B cell (primary cell): ENCODE measurements at regions of chr11 and their contacts with region 1.

Region 1: DNA sequence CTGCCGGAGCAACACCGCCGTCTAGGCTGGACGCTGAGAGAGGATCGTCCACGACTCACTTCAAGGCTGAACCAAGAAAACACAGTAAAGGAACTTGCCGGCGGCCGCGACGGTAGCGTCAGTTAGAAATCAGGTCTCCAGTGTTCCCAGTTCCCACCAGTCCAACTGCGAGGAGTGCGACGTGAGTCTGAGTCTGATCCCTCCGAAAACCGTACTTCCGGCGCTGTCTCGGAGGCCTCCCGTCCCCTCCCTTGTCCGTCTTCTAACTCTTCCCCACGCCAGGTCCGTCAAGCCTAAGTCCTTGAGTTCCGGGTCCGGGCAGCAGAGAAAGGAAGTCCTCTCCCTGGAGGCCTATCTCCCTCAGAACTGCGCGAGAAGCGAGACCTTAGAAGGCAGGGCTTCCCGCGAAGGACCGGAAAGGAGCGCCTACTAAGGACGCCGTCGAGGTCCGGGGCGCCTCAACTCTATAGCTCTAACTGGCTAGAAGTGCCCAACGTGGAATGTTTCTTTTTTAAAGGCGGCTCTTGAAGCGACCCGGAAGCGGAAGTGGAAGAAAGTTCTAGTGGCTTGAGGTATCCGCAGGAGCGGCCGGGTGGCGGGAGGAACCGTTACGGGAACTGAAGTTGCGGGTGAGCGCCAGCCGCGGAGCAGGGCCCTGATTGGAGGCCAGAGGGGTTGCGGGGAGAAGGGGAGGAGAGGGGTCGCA is at the starts of genes BANF1 and EIF1AD:
- DNase-seq: peak; percentile 98
- ATAC-seq: peak; percentile 80
- H3K4me3 ChIP-seq: peak within 1 kb of the TSS; percentile 75 to 100 (median 96)
- H3K4me3 Mint-ChIP-seq: peak within 1 kb of the TSS; percentile 98
- H3K27ac ChIP-seq: peak within 1 kb of the TSS; percentile 89 to 94
- H3K27ac Mint-ChIP-seq: peak within 1 kb of the TSS; percentile 99
- H3K4me1 ChIP-seq: peaks cover 16 to 25% of the 10 kb centered on the region in 2 donors
- H3K4me1 Mint-ChIP-seq: peaks cover 34% of the 10 kb centered on the region
- H3K27me3 ChIP-seq: no peaks in the 10 kb centered on the region
- H3K27me3 Mint-ChIP-seq: no peaks in the 10 kb centered on the region
- CTCF ChIP-seq: no peak
- total RNA-seq, gene BANF1: 99.3 and 99.5 TPM in 2 replicates
- total RNA-seq, gene EIF1AD: 61.0 and 65.2 TPM in 2 replicates

Region 2: GRCh38 chr11:65720237-65720934 is 281.7 kb before region 1 on chr11 and contains the start of gene RNASEH2C:
- CTCF ChIA-PET with region 1: no interaction called
- POLR2A ChIA-PET with region 1: no interaction called
- intact Hi-C with region 1: loop called (anchors 1 kb)
- DNase-seq: peak; percentile 89
- ATAC-seq: peak; percentile 92
- H3K4me3 ChIP-seq: peak within 1 kb of the TSS; percentile 59 to 84 (median 74)
- H3K4me3 Mint-ChIP-seq: peak within 1 kb of the TSS; percentile 97
- H3K27ac ChIP-seq: peak within 1 kb of the TSS; percentile 59 to 73
- H3K27ac Mint-ChIP-seq: peak within 1 kb of the TSS; percentile 91
- H3K4me1 ChIP-seq: peaks cover 14 to 16% of the 10 kb centered on the region in 2 donors
- H3K4me1 Mint-ChIP-seq: peaks cover 35% of the 10 kb centered on the region
- H3K27me3 ChIP-seq: no peaks in the 10 kb centered on the region
- H3K27me3 Mint-ChIP-seq: no peaks in the 10 kb centered on the region
- CTCF ChIP-seq: no peak
- total RNA-seq, gene RNASEH2C: 75.3 and 81.6 TPM in 2 replicates

Region 3: GRCh38 chr11:65919146-65920033 is 82.7 kb before region 1 on chr11 and contains the start of gene DRAP1:
- CTCF ChIA-PET with region 1: no interaction called
- POLR2A ChIA-PET with region 1: no interaction called
- intact Hi-C with region 1: loop called (anchors 1 kb)
- DNase-seq: peak; percentile 98
- ATAC-seq: peak; percentile 87
- H3K4me3 ChIP-seq: peak within 1 kb of the TSS; percentile 83 to 99 (median 93)
- H3K4me3 Mint-ChIP-seq: peak within 1 kb of the TSS; percentile 95
- H3K27ac ChIP-seq: peak within 1 kb of the TSS; percentile 66 to 85
- H3K27ac Mint-ChIP-seq: peak within 1 kb of the TSS; percentile 89
- H3K4me1 ChIP-seq: peaks cover 19 to 50% of the 10 kb centered on the region in 2 donors
- H3K4me1 Mint-ChIP-seq: peaks cover 44% of the 10 kb centered on the region
- H3K27me3 ChIP-seq: no peaks in the 10 kb centered on the region
- H3K27me3 Mint-ChIP-seq: no peaks in the 10 kb centered on the region
- CTCF ChIP-seq: no peak
- total RNA-seq, gene DRAP1: 62.9 and 71.7 TPM in 2 replicates

Region 4: DNA sequence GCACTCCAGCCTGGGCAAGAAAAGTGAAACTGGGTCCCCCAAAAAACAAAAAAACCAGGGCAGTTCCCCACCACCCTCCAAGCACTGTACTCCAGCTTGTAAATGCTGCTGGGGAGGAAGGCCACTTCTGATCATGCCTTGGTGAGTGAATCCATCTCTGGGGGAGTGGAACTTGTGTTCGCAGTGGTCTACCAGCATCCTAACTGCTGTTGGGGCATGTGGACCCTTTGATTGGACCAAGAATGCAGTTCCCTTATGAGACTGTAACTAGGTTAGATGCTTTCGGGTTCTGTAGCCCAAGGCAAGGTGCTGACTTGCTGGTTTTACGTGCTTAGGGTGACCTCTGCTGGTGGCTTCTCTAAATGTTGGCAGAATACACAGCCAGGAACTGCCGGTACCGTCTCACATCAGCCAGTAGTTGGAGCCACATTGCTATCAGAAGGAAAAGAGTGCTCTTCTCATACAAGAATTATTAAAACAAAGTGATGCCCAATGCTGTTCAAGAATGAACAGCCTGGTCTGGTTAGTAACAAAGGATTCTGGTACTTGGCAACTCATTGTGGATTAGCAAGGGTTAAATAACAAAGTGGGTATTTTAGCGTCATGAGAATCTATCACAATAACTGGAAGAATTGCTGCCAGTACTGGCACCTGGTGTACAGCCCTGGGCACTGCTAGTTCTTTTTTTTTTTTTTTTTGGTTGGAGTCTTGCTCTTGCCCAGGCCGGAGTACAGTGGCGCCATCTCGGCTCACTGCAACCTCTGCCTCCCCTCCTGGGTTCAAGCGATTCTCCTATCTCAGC is 13.1 kb before region 1 on chr11:
- CTCF ChIA-PET with region 1: interaction called, 3 read pairs
- POLR2A ChIA-PET with region 1: no interaction called
- intact Hi-C with region 1: loop called (anchors 1 kb)
- DNase-seq: peak; percentile 96
- ATAC-seq: peak; percentile 99
- H3K4me3 ChIP-seq: no peak overlapping the region
- H3K4me3 Mint-ChIP-seq: no peak overlapping the region
- H3K27ac ChIP-seq: no peak overlapping the region
- H3K27ac Mint-ChIP-seq: peak overlapping the region; percentile 84
- H3K4me1 ChIP-seq: peaks cover 3 to 7% of the 10 kb centered on the region in 2 donors
- H3K4me1 Mint-ChIP-seq: peaks cover 5% of the 10 kb centered on the region
- H3K27me3 ChIP-seq: no peaks in the 10 kb centered on the region
- H3K27me3 Mint-ChIP-seq: no peaks in the 10 kb centered on the region
- CTCF ChIP-seq: peak; percentile 99

Region 5: DNA sequence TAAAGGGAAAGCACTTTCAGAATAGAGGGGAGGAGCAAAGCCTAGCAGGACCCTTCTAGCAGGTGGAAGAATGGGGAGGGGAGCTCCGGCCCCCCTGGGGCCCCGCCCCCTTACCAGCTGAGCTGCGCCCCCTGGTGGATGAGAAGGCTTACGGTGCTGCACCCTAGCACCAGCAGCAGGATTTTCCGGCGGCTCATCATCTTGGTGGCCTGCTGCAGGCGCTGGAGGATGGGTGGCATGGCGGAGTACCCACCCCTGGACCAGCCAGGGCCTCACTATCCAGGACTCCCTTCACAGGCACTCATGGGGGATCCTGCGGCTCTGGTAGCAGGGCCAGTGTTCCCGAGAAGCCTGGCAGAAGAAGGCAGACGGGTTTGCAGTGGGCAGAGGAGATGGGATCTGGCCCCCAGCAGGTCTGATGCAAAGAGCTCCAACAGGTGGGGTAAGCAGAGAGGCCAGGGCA is 43.1 kb after region 1 on chr11:
- CTCF ChIA-PET with region 1: interaction called, 7 read pairs
- POLR2A ChIA-PET with region 1: no interaction called
- intact Hi-C with region 1: loop called (anchors 2 kb)
- DNase-seq: peak; percentile 88
- ATAC-seq: peak; percentile 96
- H3K4me3 ChIP-seq: no peak overlapping the region
- H3K4me3 Mint-ChIP-seq: no peak overlapping the region
- H3K27ac ChIP-seq: no peak overlapping the region
- H3K27ac Mint-ChIP-seq: peak overlapping the region; percentile 7
- H3K4me1 ChIP-seq: peaks cover 10 to 15% of the 10 kb centered on the region in 2 donors
- H3K4me1 Mint-ChIP-seq: peaks cover 16% of the 10 kb centered on the region
- H3K27me3 ChIP-seq: peaks cover 0 to 35% (median 5%) of the 10 kb centered on the region in 4 experiments
- H3K27me3 Mint-ChIP-seq: peaks cover 12% of the 10 kb centered on the region
- CTCF ChIP-seq: peak; percentile 94

Region 6: DNA sequence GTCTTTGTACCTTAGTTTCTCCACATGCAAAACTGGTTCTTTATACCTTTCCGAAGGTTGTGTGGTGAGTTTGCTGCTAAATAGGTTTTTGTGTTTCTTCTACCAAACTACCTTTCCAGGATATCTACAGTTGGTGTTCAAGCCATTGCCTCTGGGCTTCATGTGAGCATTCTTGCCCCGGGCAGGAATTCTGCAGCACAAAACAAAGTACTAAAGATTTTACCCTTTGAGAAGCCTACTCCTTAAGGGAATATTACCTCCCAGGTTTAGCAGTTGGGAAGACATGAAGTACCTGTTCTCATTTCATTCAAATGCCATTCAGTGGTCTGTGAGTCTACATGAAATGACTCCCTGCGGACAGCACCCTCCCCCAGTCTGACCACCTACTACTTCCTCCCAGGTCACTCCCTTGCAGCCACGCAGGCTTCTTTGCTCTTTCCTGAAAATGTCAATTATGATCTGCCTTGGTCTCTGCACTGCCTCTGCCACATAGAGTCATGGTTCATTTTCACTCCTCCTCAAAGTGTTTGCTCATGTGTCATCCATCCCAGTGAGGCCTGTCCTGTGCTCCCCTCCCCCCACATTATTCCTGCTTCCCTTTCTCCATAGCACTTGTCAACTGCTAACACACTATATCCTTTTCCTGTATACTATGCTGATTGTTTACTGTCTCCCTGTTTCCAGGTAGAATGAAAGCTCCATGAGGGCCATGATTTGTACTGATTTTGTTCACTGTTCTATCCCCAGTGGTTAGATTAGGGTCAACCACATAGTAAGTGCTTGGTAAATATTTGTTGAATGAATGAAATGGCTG is 104.9 kb after region 1 on chr11:
- CTCF ChIA-PET with region 1: no interaction called
- POLR2A ChIA-PET with region 1: no interaction called
- intact Hi-C with region 1: no loop called
- DNase-seq: no peak
- ATAC-seq: no peak
- H3K4me3 ChIP-seq: no peak overlapping the region
- H3K4me3 Mint-ChIP-seq: no peak overlapping the region
- H3K27ac ChIP-seq: peak overlapping the region in 1 of 2 donors; percentile 33
- H3K27ac Mint-ChIP-seq: peak overlapping the region; percentile 72
- H3K4me1 ChIP-seq: peaks cover 78 to 80% of the 10 kb centered on the region in 2 donors
- H3K4me1 Mint-ChIP-seq: peaks cover 82% of the 10 kb centered on the region
- H3K27me3 ChIP-seq: no peaks in the 10 kb centered on the region
- H3K27me3 Mint-ChIP-seq: no peaks in the 10 kb centered on the region
- CTCF ChIP-seq: no peak